ENCODE measurements at regions of chr2 and their contacts with region 1.

Region 1: GRCh38 chr2:230924470-230925341 is at the start of gene GPR55:
- DNase-seq: peak; percentile 56
- ATAC-seq: peak; percentile 51
- H3K4me3 ChIP-seq: peak within 1 kb of the TSS; percentile 78
- H3K27ac ChIP-seq: peak within 1 kb of the TSS; percentile 98
- H3K4me1 ChIP-seq: peaks cover 42% of the 10 kb centered on the region
- H3K27me3 ChIP-seq: no peaks in the 10 kb centered on the region
- CTCF ChIP-seq: peak; percentile 69 to 78 (median 75)
- EP300 ChIP-seq: peak in 1 of 2 experiments; percentile 44; a peak in 2 of 4 replicates
- POLR2A ChIP-seq: peak; percentile 78
- RAD21 ChIP-seq: peak; percentile 64
- polyA plus RNA-seq, gene GPR55: 2.1 to 5.5 TPM

Region 2: GRCh38 chr2:230738391-230738811 is 186.3 kb before region 1 on chr2:
- CTCF ChIA-PET with region 1: no interaction called
- POLR2A ChIA-PET with region 1: no interaction called
- RAD21 ChIA-PET with region 1: no interaction called
- SMC1A ChIA-PET with region 1: no interaction called
- in situ Hi-C with region 1: no loop called
- intact Hi-C with region 1: no loop called
- DNase-seq: no peak
- ATAC-seq: peak; percentile 14; the same call in 2 of the 3 replicates
- H3K4me3 ChIP-seq: peak overlapping the region; percentile 0; the same call in 1 of the 2 replicates
- H3K27ac ChIP-seq: peak overlapping the region; percentile 17; the same call in 1 of the 2 replicates
- H3K4me1 ChIP-seq: peaks cover 23% of the 10 kb centered on the region
- H3K27me3 ChIP-seq: no peaks in the 10 kb centered on the region
- CTCF ChIP-seq: no peak
- EP300 ChIP-seq: no peak
- POLR2A ChIP-seq: no peak
- RAD21 ChIP-seq: no peak

Region 3: GRCh38 chr2:230847883-230848388 is 76.8 kb before region 1 on chr2:
- CTCF ChIA-PET with region 1: interaction called, 20 read pairs
- POLR2A ChIA-PET with region 1: no interaction called
- RAD21 ChIA-PET with region 1: interaction called, 17 read pairs
- SMC1A ChIA-PET with region 1: interaction called, 26 read pairs
- in situ Hi-C with region 1: no loop called
- intact Hi-C with region 1: loop called (anchors 2 kb)
- DNase-seq: peak; percentile 44
- ATAC-seq: peak; percentile 100
- H3K4me3 ChIP-seq: no peak overlapping the region; the same call in 1 of the 2 replicates
- H3K27ac ChIP-seq: no peak overlapping the region
- H3K4me1 ChIP-seq: peaks cover 5% of the 10 kb centered on the region; the same call in 1 of the 2 replicates
- H3K27me3 ChIP-seq: peaks cover 0 to 3% of the 10 kb centered on the region in 2 experiments; a peak in 1 of 4 replicates
- CTCF ChIP-seq: peak; percentile 84 to 96 (median 91)
- EP300 ChIP-seq: no peak
- POLR2A ChIP-seq: no peak
- RAD21 ChIP-seq: peak; percentile 69

Region 4: GRCh38 chr2:230873476-230874451 is 50.9 kb before region 1 on chr2:
- CTCF ChIA-PET with region 1: interaction called, 18 read pairs
- POLR2A ChIA-PET with region 1: interaction called, 19 read pairs
- RAD21 ChIA-PET with region 1: interaction called, 9 read pairs
- SMC1A ChIA-PET with region 1: interaction called, 9 read pairs
- in situ Hi-C with region 1: no loop called
- intact Hi-C with region 1: no loop called
- DNase-seq: peak; percentile 74
- ATAC-seq: peak; percentile 88
- H3K4me3 ChIP-seq: peak overlapping the region; percentile 63
- H3K27ac ChIP-seq: peak overlapping the region; percentile 79
- H3K4me1 ChIP-seq: peaks cover 68% of the 10 kb centered on the region
- H3K27me3 ChIP-seq: no peaks in the 10 kb centered on the region
- CTCF ChIP-seq: no peak
- EP300 ChIP-seq: peak in 1 of 2 experiments; percentile 62; a peak in 2 of 4 replicates
- POLR2A ChIP-seq: no peak
- RAD21 ChIP-seq: peak; percentile 16; the same call in 1 of the 2 replicates

Region 5: DNA sequence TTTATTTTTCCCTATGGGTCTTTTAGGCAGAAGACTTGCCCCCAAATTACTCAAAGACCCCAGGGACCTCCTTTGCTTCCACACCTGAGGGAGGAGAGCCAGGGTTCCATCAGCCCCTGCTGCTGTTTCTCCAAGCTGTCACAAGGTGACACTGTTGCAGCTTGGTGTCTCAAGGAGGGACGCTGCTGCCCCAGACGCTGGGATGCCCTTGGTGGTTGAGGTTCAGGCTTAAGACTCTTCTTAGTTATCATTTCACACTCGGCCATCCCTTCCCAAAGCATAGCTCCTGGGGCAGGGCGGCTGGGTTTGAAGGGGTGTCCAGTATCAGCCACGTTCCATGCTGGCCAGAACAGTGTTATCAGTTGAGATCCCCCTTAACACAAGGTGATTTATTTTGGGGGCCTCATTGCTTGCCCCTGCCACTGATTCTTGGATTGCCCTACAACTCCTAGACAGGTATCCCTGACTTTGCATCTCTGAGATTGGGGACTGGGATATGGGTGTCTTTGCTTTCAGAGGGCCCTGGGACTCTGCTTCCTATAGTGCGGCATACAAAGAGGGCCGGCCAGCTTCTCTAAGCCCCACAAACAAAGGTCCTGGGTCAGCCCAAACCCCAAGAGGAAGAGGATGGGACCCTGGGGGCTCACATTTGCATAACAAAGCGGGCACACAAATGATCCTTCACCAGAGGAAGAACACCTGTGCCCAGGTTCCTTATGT is 22.4 kb before region 1 on chr2:
- CTCF ChIA-PET with region 1: interaction called, 122 read pairs
- POLR2A ChIA-PET with region 1: interaction called, 3 read pairs
- RAD21 ChIA-PET with region 1: interaction called, 58 read pairs
- SMC1A ChIA-PET with region 1: interaction called, 17 read pairs
- in situ Hi-C with region 1: no loop called
- intact Hi-C with region 1: loop called (anchors 1 kb)
- DNase-seq: no peak
- ATAC-seq: peak; percentile 94
- H3K4me3 ChIP-seq: no peak overlapping the region
- H3K27ac ChIP-seq: no peak overlapping the region
- H3K4me1 ChIP-seq: peaks cover 14% of the 10 kb centered on the region
- H3K27me3 ChIP-seq: no peaks in the 10 kb centered on the region
- CTCF ChIP-seq: peak; percentile 98 to 99 (median 98); a peak in 5 of 6 replicates
- EP300 ChIP-seq: no peak
- POLR2A ChIP-seq: no peak
- RAD21 ChIP-seq: peak; percentile 99

Region 6: GRCh38 chr2:230942920-230943896 is 18.5 kb after region 1 on chr2:
- CTCF ChIA-PET with region 1: interaction called, 74 read pairs
- POLR2A ChIA-PET with region 1: interaction called, 91 read pairs
- RAD21 ChIA-PET with region 1: interaction called, 32 read pairs
- SMC1A ChIA-PET with region 1: interaction called, 248 read pairs
- in situ Hi-C with region 1: no loop called
- intact Hi-C with region 1: loop called (anchors 1 kb)
- DNase-seq: peak; percentile 82
- ATAC-seq: peak; percentile 79
- H3K4me3 ChIP-seq: peak overlapping the region; percentile 85
- H3K27ac ChIP-seq: peak overlapping the region; percentile 99
- H3K4me1 ChIP-seq: peaks cover 27% of the 10 kb centered on the region
- H3K27me3 ChIP-seq: no peaks in the 10 kb centered on the region
- CTCF ChIP-seq: no peak
- EP300 ChIP-seq: no peak
- POLR2A ChIP-seq: peak; percentile 78
- RAD21 ChIP-seq: no peak

Region 7: GRCh38 chr2:230974096-230974913 is 49.6 kb after region 1 on chr2:
- CTCF ChIA-PET with region 1: interaction called, 14 read pairs
- POLR2A ChIA-PET with region 1: interaction called, 32 read pairs
- RAD21 ChIA-PET with region 1: interaction called, 18 read pairs
- SMC1A ChIA-PET with region 1: interaction called, 45 read pairs
- in situ Hi-C with region 1: no loop called
- intact Hi-C with region 1: loop called (anchors 1 kb)
- DNase-seq: peak; percentile 94
- ATAC-seq: peak; percentile 86
- H3K4me3 ChIP-seq: no peak overlapping the region; the same call in 1 of the 2 replicates
- H3K27ac ChIP-seq: peak overlapping the region; percentile 97
- H3K4me1 ChIP-seq: peaks cover 67% of the 10 kb centered on the region
- H3K27me3 ChIP-seq: no peaks in the 10 kb centered on the region
- CTCF ChIP-seq: no peak
- EP300 ChIP-seq: peak; percentile 79 to 94
- POLR2A ChIP-seq: 0 out of 2 replicates have a peak, but pooled peaks have one; percentile 44
- RAD21 ChIP-seq: peak; percentile 35

Region 8: GRCh38 chr2:231056453-231057424 is 132.0 kb after region 1 on chr2 and contains the start of gene PSMD1:
- CTCF ChIA-PET with region 1: interaction called, 6 read pairs
- POLR2A ChIA-PET with region 1: interaction called, 4 read pairs
- RAD21 ChIA-PET with region 1: interaction called, 5 read pairs
- SMC1A ChIA-PET with region 1: interaction called, 3 read pairs
- in situ Hi-C with region 1: no loop called
- intact Hi-C with region 1: loop called (anchors 2 kb)
- DNase-seq: peak; percentile 80
- ATAC-seq: peak; percentile 87
- H3K4me3 ChIP-seq: peak within 1 kb of the TSS; percentile 90
- H3K27ac ChIP-seq: peak within 1 kb of the TSS; percentile 92
- H3K4me1 ChIP-seq: peaks cover 8% of the 10 kb centered on the region; the same call in 1 of the 2 replicates
- H3K27me3 ChIP-seq: no peaks in the 10 kb centered on the region
- CTCF ChIP-seq: peak; percentile 89 to 98 (median 94)
- EP300 ChIP-seq: 0 out of 4 replicates have a peak, but pooled peaks of 1 of the 2 experiments have one; percentile 10
- POLR2A ChIP-seq: peak; percentile 92
- RAD21 ChIP-seq: no peak
- polyA plus RNA-seq, gene PSMD1: 96.4 to 220 TPM